ENCODE measurements at regions of chr1 and their contacts with region 1.

Region 1: DNA sequence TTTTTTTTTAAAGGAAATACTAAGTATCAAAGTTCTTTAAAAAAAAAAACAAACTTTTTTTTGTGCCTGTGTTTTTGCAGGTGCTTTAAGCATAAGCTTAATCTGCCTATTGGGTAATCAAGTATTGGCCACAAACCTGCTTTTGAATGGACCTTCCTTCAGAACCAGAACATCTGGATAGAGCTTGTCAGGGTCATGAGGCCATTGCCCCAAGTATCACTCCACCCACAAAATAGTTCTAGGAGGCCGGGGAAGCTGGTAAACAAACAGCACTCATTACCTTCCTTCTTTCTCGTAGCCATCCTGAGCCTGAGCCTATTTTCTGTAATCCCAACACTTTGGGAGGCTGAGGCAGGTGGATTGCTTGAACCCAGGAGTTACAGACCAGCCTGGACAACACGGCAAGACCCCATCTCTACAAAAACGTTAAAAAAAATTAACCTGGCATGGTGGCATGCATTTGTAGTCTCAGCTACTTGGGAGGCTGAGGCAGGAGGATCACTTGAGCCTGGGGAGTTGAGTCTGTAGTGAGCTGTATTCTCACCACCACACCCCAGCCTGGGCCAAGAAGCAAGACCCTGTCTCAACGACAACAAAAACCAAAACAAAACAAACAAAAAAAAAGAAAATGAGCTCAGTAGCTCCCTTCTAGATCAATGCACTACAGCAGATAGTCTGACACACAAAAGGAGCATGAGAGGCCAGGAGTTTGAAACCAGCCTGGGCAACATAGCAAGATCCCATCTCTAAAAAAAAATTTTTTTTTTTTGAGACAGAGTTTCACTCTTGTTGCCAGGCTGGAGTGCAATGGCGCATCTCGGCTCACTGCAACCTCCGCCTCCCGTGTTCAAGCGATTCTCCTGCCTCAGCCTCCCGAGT is 34.1 kb upstream of the EPS15 start:
- DNase-seq: no peak
- ATAC-seq: no peak
- H3K4me3 ChIP-seq: no peak overlapping the region
- H3K4me3 Mint-ChIP-seq: no peak overlapping the region
- H3K27ac ChIP-seq: no peak overlapping the region
- H3K27ac Mint-ChIP-seq: no peak overlapping the region
- H3K4me1 ChIP-seq: peaks cover 16 to 21% of the 10 kb centered on the region in 2 donors
- H3K4me1 Mint-ChIP-seq: peaks cover 26% of the 10 kb centered on the region
- H3K27me3 ChIP-seq: no peaks in the 10 kb centered on the region
- H3K27me3 Mint-ChIP-seq: no peaks in the 10 kb centered on the region
- CTCF ChIP-seq: no peak

Region 2: GRCh38 chr1:51564124-51564523 is 11.0 kb after region 1 on chr1:
- CTCF ChIA-PET with region 1: no interaction called
- POLR2A ChIA-PET with region 1: interaction called, 11 read pairs
- intact Hi-C with region 1: no loop called
- DNase-seq: peak; percentile 63
- ATAC-seq: peak; percentile 63
- H3K4me3 ChIP-seq: no peak overlapping the region
- H3K4me3 Mint-ChIP-seq: no peak overlapping the region
- H3K27ac ChIP-seq: no peak overlapping the region
- H3K27ac Mint-ChIP-seq: peak overlapping the region; percentile 57
- H3K4me1 ChIP-seq: peaks cover 30 to 32% of the 10 kb centered on the region in 2 donors
- H3K4me1 Mint-ChIP-seq: peaks cover 20% of the 10 kb centered on the region
- H3K27me3 ChIP-seq: no peaks in the 10 kb centered on the region
- H3K27me3 Mint-ChIP-seq: no peaks in the 10 kb centered on the region
- CTCF ChIP-seq: no peak

Measured in B cell (primary cell).